ENCODE measurements at regions of chr15 and their contacts with region 1.

Region 1: GRCh38 chr15:79380755-79381497 is 51.2 kb upstream of the MINAR1 start:
- DNase-seq: peak; percentile 66 to 79 (median 69)
- ATAC-seq: peak; percentile 98
- H3K4me3 ChIP-seq: no peak overlapping the region
- H3K27ac ChIP-seq: no peak overlapping the region
- H3K4me1 ChIP-seq: peaks cover 0 to 6% of the 10 kb centered on the region in 2 experiments; a peak in 1 of 5 replicates
- H3K27me3 ChIP-seq: no peaks in the 10 kb centered on the region
- CTCF ChIP-seq: peak; percentile 83 to 88 (median 87)
- EP300 ChIP-seq: no peak
- POLR2A ChIP-seq: no peak
- RAD21 ChIP-seq: peak; percentile 66 to 87

Region 2: GRCh38 chr15:79339564-79340314 is 41.2 kb before region 1 on chr15:
- CTCF ChIA-PET with region 1: no interaction called
- POLR2A ChIA-PET with region 1: no interaction called
- in situ Hi-C with region 1: no loop called
- intact Hi-C with region 1: loop called (anchors 5 kb)
- DNase-seq: peak; percentile 31 to 49 (median 44)
- ATAC-seq: peak; percentile 71
- H3K4me3 ChIP-seq: no peak overlapping the region
- H3K27ac ChIP-seq: no peak overlapping the region
- H3K4me1 ChIP-seq: no peaks in the 10 kb centered on the region
- H3K27me3 ChIP-seq: no peaks in the 10 kb centered on the region
- CTCF ChIP-seq: peak; percentile 64 to 88 (median 80)
- EP300 ChIP-seq: no peak
- POLR2A ChIP-seq: no peak
- RAD21 ChIP-seq: peak; percentile 71 to 79

Region 3: DNA sequence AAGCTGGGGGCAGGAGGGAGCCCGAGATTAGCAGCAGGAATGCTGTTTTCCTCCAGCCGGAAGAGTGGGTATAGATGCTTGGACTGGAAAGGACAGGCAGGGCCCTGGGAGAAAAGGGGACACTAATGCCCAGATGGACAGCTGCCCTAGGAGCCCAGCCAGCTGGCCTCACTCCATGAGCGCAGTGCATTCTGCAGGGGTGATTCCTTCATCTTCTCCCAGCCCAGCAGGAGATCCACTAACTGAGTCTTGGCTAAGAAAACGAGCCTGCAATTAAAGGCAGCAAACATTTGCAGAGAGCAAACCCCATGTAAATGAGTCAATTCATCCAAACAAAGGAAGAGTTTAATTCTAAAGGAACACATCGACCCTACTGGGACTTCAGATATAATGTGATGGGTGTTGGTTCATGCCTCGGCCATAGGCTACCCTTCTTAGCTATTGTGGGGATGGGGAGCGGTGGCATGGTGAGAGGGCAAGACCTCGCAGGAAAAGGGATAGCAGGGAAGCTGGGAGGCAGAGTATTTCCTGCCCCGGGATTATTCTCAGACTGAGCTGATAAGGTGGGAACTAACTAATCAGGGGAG is 37.9 kb after region 1 on chr15:
- CTCF ChIA-PET with region 1: no interaction called
- POLR2A ChIA-PET with region 1: no interaction called
- in situ Hi-C with region 1: no loop called
- intact Hi-C with region 1: no loop called
- DNase-seq: no peak
- ATAC-seq: no peak
- H3K4me3 ChIP-seq: no peak overlapping the region
- H3K27ac ChIP-seq: no peak overlapping the region
- H3K4me1 ChIP-seq: no peaks in the 10 kb centered on the region
- H3K27me3 ChIP-seq: no peaks in the 10 kb centered on the region
- CTCF ChIP-seq: no peak
- EP300 ChIP-seq: no peak
- POLR2A ChIP-seq: no peak
- RAD21 ChIP-seq: no peak

Region 4: GRCh38 chr15:79596051-79596507 is 215.2 kb after region 1 on chr15:
- CTCF ChIA-PET with region 1: interaction called, 20 read pairs
- POLR2A ChIA-PET with region 1: interaction called, 6 read pairs
- in situ Hi-C with region 1: loop called (anchors 10 kb)
- intact Hi-C with region 1: loop called (anchors 1 kb)
- DNase-seq: peak; percentile 91 to 96 (median 95)
- ATAC-seq: peak; percentile 100
- H3K4me3 ChIP-seq: no peak overlapping the region
- H3K27ac ChIP-seq: no peak overlapping the region
- H3K4me1 ChIP-seq: no peaks in the 10 kb centered on the region
- H3K27me3 ChIP-seq: peaks cover 2 to 5% of the 10 kb centered on the region in 2 experiments; a peak in 1 of 5 replicates
- CTCF ChIP-seq: peak; percentile 99 to 100 (median 100)
- EP300 ChIP-seq: no peak
- POLR2A ChIP-seq: no peak
- RAD21 ChIP-seq: peak; percentile 80 to 94

Region 5: GRCh38 chr15:79853458-79854328 is 472.8 kb after region 1 on chr15:
- CTCF ChIA-PET with region 1: interaction called, 3 read pairs
- POLR2A ChIA-PET with region 1: no interaction called
- in situ Hi-C with region 1: no loop called
- intact Hi-C with region 1: loop called (anchors 5 kb)
- DNase-seq: peak; percentile 76 to 88 (median 83)
- ATAC-seq: peak; percentile 99
- H3K4me3 ChIP-seq: no peak overlapping the region
- H3K27ac ChIP-seq: no peak overlapping the region; the same call in 2 of the 3 replicates
- H3K4me1 ChIP-seq: peaks cover 0 to 4% of the 10 kb centered on the region in 2 experiments; a peak in 1 of 5 replicates
- H3K27me3 ChIP-seq: no peaks in the 10 kb centered on the region
- CTCF ChIP-seq: peak; percentile 84 to 96 (median 95)
- EP300 ChIP-seq: 0 out of 2 replicates have a peak, but pooled peaks have one; percentile 48
- POLR2A ChIP-seq: no peak
- RAD21 ChIP-seq: peak; percentile 68 to 76

Region 6: DNA sequence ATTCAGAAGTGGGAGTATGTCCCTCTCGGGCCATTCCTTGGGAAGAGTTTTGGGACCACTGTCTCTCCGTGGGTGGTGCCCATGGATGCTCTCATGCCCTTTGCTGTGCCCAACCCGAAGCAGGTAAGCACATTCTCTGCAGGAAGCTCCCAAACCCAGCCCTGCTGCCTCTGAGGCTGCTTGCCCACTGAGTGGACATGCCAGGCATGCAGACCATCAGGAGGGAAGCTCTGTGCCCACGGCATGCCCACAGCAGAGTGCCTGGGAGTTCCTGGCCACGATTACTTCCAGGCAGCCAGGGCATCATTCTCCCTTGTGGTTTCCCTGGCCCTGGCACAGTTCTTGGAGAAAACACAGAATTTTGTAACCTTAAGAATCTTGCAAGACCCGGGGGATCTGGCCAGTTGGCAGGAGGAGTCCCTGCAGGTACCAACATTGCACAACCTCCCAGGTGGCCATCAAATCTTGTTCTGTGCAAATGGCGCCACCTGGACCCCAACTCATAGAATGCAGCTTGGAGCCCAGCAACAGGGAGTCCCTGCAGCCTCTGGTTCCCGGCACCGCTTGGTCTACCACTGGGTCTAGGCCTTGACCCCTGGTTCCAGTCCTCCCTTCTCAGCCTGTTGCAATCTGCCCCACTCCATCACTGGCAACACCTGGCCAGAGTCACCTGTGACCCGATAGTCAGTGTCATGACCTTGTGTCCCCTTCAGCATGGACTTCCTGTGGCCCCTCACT is 792.3 kb after region 1 on chr15:
- CTCF ChIA-PET with region 1: interaction called, 5 read pairs
- POLR2A ChIA-PET with region 1: no interaction called
- in situ Hi-C with region 1: no loop called
- intact Hi-C with region 1: loop called (anchors 10 kb)
- DNase-seq: peak; percentile 65 to 79 (median 72)
- ATAC-seq: peak; percentile 95
- H3K4me3 ChIP-seq: no peak overlapping the region
- H3K27ac ChIP-seq: no peak overlapping the region
- H3K4me1 ChIP-seq: peaks cover 0 to 3% of the 10 kb centered on the region in 2 experiments; a peak in 1 of 5 replicates
- H3K27me3 ChIP-seq: no peaks in the 10 kb centered on the region
- CTCF ChIP-seq: peak; percentile 84 to 88 (median 85)
- EP300 ChIP-seq: no peak
- POLR2A ChIP-seq: no peak
- RAD21 ChIP-seq: peak; percentile 88 to 93